ENCODE measurements at regions of chr1 and their contacts with region 1.

Region 1: GRCh38 chr1:32992489-32993323 is 28.1 kb upstream of the RNF19B start:
- H3K4me3 ChIP-seq: no peak overlapping the region
- H3K27ac ChIP-seq: no peak overlapping the region
- H3K4me1 ChIP-seq: no peaks in the 10 kb centered on the region; the same call in 1 of the 2 replicates
- CTCF ChIP-seq: no peak

Region 2: GRCh38 chr1:32774950-32775634 is 217.6 kb before region 1 on chr1:
- CTCF ChIA-PET with region 1: no interaction called
- POLR2A ChIA-PET with region 1: no interaction called
- H3K4me3 ChIP-seq: no peak overlapping the region
- H3K27ac ChIP-seq: no peak overlapping the region
- H3K4me1 ChIP-seq: no peaks in the 10 kb centered on the region
- CTCF ChIP-seq: no peak

Region 3: DNA sequence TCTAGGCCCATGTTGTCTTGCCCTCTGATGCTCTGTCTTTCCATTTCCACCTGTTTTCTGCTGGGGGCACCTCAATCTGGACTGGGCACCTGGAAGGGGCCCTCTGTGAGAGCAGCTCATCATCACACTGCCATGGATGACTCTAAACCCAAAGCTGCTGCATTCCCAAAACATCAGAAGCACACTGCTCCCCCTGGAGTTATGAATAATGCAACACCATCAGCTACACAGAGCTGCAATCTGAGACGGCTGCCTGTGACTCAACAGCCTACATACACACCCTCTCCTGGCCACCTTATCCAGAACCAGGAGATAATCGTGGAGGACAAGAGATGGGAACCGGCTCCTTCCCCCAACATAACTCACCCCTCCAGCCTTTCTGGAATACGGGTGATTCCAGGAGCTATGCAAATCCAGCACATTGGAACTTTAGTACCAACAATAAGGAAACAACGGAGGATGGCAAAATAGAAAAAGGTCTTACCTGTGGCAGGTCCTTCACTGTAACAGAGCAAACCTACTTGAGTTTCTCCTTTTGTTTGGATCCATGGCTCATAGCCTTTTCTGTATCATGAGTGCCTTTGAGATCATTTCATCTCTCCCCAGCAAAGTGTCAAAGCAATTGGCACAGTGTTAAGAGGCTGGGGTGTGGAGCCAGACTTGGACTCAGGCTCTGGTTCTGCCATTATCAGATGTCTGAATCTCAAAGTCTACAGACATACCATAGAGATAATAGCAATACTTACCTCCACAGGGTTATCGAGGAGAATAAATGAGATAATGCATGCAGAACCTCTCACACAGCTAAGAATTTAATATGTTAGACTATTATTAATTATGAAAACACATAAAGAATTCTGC is 14.7 kb after region 1 on chr1:
- CTCF ChIA-PET with region 1: interaction called, 15 read pairs
- POLR2A ChIA-PET with region 1: interaction called, 5 read pairs
- H3K4me3 ChIP-seq: no peak overlapping the region
- H3K27ac ChIP-seq: no peak overlapping the region
- H3K4me1 ChIP-seq: peaks cover 3% of the 10 kb centered on the region; the same call in 1 of the 2 replicates
- CTCF ChIP-seq: peak; percentile 76

Measured in HEK293 (cell line).